Stomach (tissue), 19 donors: ENCODE measurements at regions of chr22 and their contacts with region 1.

Region 1: DNA sequence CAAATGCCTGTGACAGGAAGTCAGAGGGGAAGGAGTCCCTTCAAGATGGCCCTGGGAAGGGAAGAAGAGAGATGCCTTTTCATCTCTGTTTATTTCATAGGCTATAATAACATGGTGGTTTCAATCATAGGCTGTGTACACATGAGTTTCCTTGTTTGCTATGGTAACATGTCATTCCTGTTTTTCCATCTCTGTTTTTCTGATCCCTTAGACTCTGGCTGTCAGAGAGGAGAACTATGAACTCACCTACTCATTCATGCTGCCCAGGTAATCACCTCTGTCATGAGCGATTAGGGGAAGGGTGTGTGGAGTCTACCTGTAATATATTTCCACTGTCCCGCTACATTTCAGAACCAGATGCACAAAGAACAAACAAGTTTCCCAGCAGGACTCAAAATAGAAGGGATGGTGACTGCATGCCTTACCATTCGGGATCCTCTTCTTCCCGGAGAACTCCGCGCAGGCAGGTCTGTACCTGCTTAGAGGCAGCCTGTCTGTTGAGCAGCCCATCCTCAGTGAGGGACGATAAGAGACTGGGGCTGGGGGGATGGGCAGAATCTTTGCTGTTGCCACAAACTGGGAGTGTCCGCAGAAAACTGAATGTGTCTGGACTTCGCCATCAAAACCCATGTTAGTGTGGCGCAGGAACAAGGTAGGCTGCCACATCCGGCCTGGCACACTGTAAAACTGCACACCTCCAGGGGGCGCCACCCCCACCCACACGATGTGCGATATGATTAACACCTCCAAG is 7.1 kb upstream of the PEX26 start:
- DNase-seq: no peak
- H3K4me3 ChIP-seq: no peak overlapping the region
- H3K27ac ChIP-seq: no peak overlapping the region
- H3K4me1 ChIP-seq: peaks cover 0 to 29% (median 11%) of the 10 kb centered on the region in 4 donors
- H3K27me3 ChIP-seq: no peaks in the 10 kb centered on the region
- CTCF ChIP-seq: no peak
- EP300 ChIP-seq: no peak
- POLR2A ChIP-seq: no peak

Region 2: DNA sequence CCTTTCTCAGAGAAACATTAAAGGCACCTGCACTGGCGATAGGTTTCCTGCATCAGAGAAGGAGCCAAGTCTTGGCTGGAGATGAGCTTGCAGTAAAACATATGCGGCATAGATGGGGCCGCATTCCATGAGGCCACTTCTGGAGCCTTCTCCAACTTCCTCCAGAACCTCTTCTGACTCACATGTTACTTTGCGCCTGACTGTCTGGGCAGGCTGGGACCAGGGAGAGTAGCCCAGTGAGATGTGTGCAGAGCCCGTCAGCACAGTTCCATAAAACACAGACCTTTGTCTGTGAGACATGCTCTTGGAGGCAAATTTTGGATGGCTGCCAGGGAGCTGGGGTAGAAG is 241.1 kb before region 1 on chr22:
- intact Hi-C with region 1: loop called (anchors 5 kb)
- DNase-seq: no peak
- H3K4me3 ChIP-seq: no peak overlapping the region
- H3K27ac ChIP-seq: peak overlapping the region in 2 of 5 donors; percentile 69 to 84
- H3K4me1 ChIP-seq: peaks cover 11 to 36% (median 22%) of the 10 kb centered on the region in 4 donors
- H3K27me3 ChIP-seq: no peaks in the 10 kb centered on the region
- CTCF ChIP-seq: no peak
- EP300 ChIP-seq: no peak
- POLR2A ChIP-seq: no peak